Activated B cell treated with CpG ODN at 0.5 μM for 24 hours (primary cell): ENCODE measurements at regions of chr12 and their contacts with region 1.

Region 1: DNA sequence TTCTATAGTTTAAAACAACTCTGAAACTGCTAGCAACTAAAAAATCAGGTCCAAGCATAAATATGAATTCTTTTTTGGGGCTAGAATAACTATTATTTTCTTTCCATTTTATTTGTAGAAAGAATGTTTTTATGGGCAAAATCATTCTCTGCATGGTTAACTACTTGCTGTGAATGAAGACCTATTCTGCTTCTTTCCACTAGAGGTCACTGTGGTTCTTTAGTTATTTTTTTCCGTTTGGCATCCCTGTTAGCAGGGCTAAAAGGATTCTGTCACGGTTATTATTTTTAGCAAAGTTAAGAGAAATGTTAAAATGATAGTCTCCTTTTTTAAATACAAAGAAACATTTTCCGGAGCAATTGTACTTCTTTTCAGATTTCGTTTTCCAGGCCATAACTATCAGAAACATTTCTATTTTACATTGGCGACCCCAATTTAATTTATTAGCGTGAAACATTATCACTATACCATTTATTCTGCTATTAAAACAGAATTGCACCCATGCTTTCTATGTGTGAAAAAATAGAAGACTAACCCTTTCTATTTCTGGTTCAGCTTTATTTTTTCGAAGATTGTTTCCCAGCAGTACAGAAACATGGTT is 404.8 kb downstream of the ATP23 start:
- DNase-seq: no peak
- ATAC-seq: no peak
- H3K4me3 Mint-ChIP-seq: no peak overlapping the region
- H3K27ac Mint-ChIP-seq: no peak overlapping the region
- H3K4me1 Mint-ChIP-seq: peaks cover 6% of the 10 kb centered on the region
- H3K27me3 Mint-ChIP-seq: peaks cover 4% of the 10 kb centered on the region
- CTCF ChIP-seq: peak; percentile 95

Region 2: DNA sequence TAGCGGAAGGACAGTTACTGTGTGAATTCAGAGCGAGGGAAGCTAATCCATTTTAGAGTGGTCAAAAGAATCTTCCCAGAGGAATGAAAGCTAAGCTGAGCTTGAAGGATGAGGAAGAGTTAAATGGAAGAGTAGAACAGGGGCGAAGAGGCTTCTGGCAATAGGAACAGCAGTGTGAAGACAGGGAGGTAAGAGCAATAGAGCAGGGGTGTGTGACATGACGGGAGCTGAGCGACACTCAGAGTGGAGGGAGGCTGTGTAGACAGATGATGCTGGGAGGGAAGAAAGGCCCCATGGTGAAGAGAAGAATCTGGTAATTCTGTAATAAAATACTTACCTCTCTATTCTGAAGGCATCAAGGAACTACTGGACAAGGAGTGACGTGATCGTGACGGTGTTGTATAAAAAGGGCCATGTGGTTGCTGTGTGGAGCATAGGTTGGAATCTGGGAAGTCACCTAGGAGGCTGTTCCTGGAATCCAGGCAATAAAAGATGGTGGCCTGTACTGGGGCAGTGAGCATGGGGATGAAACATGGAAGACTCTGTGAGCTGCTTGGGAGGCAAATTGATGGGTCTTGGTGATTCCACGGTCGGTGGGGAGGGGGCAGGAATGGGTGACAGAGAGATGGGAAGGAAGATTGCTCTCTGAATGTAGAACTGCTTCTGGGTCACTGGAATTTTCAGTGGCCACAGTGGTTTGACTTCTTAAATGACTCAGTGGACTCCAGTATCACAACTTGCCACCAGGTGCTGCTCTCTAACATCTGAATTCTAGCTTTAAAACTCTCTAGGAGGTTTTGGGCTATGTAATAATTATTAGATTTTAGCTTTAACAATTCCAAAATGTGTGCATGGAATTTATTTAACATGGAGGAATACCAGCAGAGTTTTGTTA is 240.7 kb before region 1 on chr12:
- CTCF ChIA-PET with region 1: no interaction called
- POLR2A ChIA-PET with region 1: no interaction called
- intact Hi-C with region 1: no loop called
- DNase-seq: no peak
- ATAC-seq: no peak
- H3K4me3 Mint-ChIP-seq: no peak overlapping the region
- H3K27ac Mint-ChIP-seq: no peak overlapping the region
- H3K4me1 Mint-ChIP-seq: no peaks in the 10 kb centered on the region
- H3K27me3 Mint-ChIP-seq: peaks cover 3% of the 10 kb centered on the region
- CTCF ChIP-seq: no peak

Region 3: DNA sequence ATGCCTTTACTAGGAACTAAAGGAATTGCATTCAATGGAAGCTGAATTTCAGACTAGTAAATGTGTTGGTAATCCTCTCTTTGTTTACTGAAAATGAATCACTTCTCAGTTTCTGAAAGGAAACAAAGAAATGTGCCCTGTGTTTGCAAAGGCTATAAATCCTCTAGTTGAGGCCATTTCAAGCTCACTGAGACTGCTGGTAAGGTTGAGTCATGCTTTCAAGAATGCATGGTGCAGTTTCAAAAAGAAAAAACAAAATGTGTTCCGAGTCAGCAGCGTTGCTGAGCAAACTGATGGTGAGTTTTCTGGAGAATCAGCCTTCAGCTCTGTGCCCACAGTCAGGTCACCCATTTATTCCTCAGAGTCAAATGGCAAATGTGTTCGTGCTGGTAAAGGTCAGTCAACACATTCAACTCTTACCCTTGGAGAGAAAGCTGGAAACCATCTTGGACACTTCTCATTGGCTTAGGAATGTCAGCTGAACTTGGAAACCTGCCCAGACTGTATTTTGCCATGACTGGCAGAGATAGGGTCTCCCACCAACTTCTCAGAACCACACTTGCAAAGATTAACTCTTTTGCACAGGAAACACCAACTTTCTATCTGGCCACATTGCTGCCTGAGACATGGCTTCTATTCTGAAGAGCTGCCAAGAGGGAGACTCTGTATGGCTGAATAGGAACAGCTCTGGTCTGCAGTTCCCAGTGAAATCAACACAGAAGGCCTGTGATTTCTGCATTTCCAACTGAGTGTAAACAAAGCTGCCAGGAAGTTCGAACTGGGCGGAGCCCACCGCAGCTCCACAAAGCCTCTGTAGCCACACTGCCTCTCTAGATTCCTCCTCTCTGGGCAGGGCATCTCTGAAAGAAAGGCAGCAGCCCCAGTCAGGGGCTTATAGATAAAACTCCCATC is 79.6 kb after region 1 on chr12:
- CTCF ChIA-PET with region 1: no interaction called
- POLR2A ChIA-PET with region 1: no interaction called
- intact Hi-C with region 1: no loop called
- DNase-seq: no peak
- ATAC-seq: no peak
- H3K4me3 Mint-ChIP-seq: no peak overlapping the region
- H3K27ac Mint-ChIP-seq: no peak overlapping the region
- H3K4me1 Mint-ChIP-seq: no peaks in the 10 kb centered on the region
- H3K27me3 Mint-ChIP-seq: peaks cover 5% of the 10 kb centered on the region
- CTCF ChIP-seq: no peak

Region 4: DNA sequence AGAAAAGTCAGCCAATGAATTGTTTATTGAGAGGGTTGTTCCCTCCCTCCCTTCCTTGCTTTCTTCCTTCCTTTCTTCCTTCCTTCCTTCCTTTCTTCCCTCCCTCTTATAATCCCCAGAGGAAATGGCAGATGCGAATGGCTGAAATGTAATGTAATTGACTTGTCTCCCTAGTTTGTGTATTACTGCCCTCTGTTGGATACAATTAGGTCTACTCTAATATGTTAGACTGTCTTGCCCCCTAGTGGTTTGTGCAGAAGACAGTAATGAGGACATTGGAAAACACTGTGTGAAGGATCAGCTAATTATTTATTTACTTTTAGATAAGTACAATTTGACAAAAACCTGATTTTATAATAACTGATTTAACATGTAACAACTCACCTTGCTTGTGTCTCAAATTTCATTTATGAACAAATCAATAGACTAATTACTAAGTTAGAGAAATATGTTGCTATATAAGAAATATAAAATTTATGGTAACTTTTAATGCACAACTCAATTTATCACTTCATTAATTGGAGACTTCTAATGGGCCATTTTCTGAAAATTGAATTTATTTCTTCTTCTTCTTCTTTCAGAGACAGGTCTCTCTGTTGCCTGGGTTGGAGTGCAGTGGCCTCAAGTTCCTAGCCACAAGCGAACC is 804.0 kb after region 1 on chr12:
- CTCF ChIA-PET with region 1: no interaction called
- POLR2A ChIA-PET with region 1: no interaction called
- intact Hi-C with region 1: loop called (anchors 1 kb)
- DNase-seq: no peak
- ATAC-seq: peak; percentile 49
- H3K4me3 Mint-ChIP-seq: no peak overlapping the region
- H3K27ac Mint-ChIP-seq: no peak overlapping the region
- H3K4me1 Mint-ChIP-seq: no peaks in the 10 kb centered on the region
- H3K27me3 Mint-ChIP-seq: no peaks in the 10 kb centered on the region
- CTCF ChIP-seq: no peak